Breast epithelium (tissue), 4 donors: ENCODE measurements at regions of chr3 and their contacts with region 1.

Region 1: DNA sequence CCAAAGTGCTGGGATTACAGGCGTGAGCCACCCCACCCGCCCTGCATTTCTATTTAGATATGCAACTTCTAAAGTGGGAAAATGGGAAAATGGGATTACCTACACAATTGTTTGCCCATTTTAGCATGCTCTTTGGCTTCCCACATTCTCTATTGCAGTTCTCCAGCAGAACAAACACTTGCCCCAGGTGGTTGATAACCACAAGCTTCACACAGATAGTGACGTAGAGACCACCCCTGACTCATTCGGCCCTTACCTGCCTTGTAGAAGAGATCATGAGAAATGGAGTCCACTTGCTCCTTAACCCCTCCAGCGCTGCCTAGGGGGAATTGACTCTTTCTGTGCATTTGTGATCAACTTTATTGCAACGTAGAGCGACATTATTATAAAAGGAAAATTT is 83.2 kb upstream of the RAP2B start:
- DNase-seq: no peak
- H3K4me3 ChIP-seq: no peak overlapping the region
- H3K27ac ChIP-seq: no peak overlapping the region
- H3K4me1 ChIP-seq: no peaks in the 10 kb centered on the region
- H3K27me3 ChIP-seq: no peaks in the 10 kb centered on the region
- CTCF ChIP-seq: no peak
- POLR2A ChIP-seq: no peak

Region 2: GRCh38 chr3:153138276-153139210 is 59.7 kb after region 1 on chr3:
- intact Hi-C with region 1: no loop called
- DNase-seq: peak; percentile 57 to 90
- H3K4me3 ChIP-seq: no peak overlapping the region
- H3K27ac ChIP-seq: peak overlapping the region; percentile 85 to 92
- H3K4me1 ChIP-seq: peaks cover 0 to 4% of the 10 kb centered on the region in 2 donors
- H3K27me3 ChIP-seq: no peaks in the 10 kb centered on the region
- CTCF ChIP-seq: no peak
- POLR2A ChIP-seq: no peak

Region 3: DNA sequence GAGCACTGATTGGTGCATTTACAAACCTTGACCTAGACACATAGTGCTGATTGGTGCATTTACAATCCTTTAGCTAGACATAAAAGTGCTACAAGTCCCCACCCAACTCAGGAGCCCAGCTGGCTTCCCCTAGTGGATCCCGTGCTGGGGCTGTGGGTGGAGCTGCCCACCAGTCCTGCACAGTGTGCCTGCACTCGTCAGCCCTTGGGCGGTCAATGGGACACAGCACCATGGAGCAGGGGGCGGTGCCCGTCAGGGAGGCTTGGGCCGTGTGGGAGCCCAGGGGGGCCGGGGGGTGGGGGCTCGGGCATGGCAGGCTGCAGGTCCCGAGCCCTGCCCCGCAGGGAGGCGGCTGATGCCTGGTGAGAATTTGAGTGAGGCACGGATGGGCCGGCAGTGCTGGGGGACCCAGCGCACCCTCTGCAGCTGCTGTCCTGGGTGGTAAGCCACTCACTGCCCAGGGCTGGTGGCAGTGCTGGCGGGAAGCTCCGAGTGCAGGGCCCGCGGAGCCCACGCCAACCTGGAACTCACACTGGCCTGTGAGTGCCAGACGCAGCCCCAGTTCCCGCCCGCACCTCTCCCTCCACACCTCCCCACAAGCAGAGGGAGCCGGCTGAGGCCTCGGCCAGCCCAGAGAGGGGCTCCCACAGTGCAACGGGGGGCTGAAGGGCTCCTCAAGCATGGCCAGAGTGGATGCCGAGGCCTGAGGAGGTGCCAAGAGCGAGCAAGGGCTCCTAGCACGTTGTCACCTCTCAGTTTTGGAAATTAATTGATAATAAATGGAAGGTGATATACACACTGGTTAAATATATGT is 290.9 kb after region 1 on chr3:
- intact Hi-C with region 1: no loop called
- DNase-seq: no peak
- H3K4me3 ChIP-seq: no peak overlapping the region
- H3K27ac ChIP-seq: no peak overlapping the region
- H3K4me1 ChIP-seq: no peaks in the 10 kb centered on the region
- H3K27me3 ChIP-seq: no peaks in the 10 kb centered on the region
- CTCF ChIP-seq: no peak
- POLR2A ChIP-seq: no peak

Region 4: GRCh38 chr3:154034797-154035330 is 956.0 kb after region 1 on chr3:
- intact Hi-C with region 1: loop called (anchors 5 kb)
- DNase-seq: no peak
- H3K4me3 ChIP-seq: no peak overlapping the region
- H3K27ac ChIP-seq: no peak overlapping the region
- H3K4me1 ChIP-seq: no peaks in the 10 kb centered on the region
- H3K27me3 ChIP-seq: no peaks in the 10 kb centered on the region
- CTCF ChIP-seq: no peak
- POLR2A ChIP-seq: no peak